ENCODE measurements at regions of chr7 and their contacts with region 1.

Region 1: GRCh38 chr7:131265227-131265626 is 62.4 kb upstream of the MKLN1 start:
- DNase-seq: no peak
- ATAC-seq: peak; percentile 34
- H3K4me3 Mint-ChIP-seq: no peak overlapping the region
- H3K27ac Mint-ChIP-seq: no peak overlapping the region
- H3K4me1 Mint-ChIP-seq: peaks cover 13% of the 10 kb centered on the region
- H3K27me3 Mint-ChIP-seq: no peaks in the 10 kb centered on the region
- CTCF ChIP-seq: no peak

Region 2: DNA sequence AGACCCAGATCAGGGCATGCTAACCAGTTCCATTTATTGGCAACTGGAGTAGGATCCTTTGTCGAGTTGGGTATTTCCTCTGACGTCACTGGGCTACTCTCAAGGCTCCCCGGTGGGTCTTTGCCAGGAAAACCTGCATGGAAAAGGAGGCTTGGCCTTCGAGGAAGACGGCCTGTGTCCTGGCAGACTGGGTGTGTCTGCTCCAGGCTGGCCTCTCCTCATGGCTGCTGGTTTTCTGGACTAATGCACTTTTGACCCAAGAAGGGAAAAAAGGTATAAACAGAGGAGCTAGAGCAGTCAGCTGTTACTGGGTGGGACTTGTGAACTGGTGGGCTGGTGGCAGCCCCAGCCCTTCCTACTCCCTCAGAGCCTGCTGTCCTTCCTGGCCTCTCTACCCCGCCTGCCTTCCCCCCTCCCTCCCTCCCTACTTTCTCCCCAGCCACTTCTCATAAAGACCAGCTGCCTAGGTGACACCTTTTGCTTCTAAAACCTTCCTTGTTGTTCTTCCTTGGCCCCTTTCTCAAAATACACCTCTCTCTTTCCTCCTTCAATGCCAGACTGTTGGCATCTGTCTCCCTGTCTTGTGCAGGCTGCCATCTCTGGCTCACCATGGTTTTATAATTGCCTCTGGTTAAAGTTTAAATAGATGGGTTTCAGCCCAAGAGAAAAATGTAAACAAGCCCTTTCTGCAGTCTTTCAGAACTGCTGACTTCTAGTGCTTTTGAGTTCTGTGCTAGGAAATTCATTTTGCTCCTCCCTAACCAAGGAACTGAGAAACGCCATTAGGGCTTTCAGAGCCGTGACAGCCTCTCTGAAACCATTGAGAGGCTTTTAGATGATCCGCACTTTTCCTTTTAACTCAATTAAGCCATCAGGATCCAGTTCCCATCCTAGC is 39.4 kb before region 1 on chr7:
- CTCF ChIA-PET with region 1: no interaction called
- POLR2A ChIA-PET with region 1: no interaction called
- intact Hi-C with region 1: no loop called
- DNase-seq: no peak
- ATAC-seq: no peak
- H3K4me3 Mint-ChIP-seq: no peak overlapping the region
- H3K27ac Mint-ChIP-seq: no peak overlapping the region
- H3K4me1 Mint-ChIP-seq: peaks cover 7% of the 10 kb centered on the region
- H3K27me3 Mint-ChIP-seq: no peaks in the 10 kb centered on the region
- CTCF ChIP-seq: no peak

Region 3: DNA sequence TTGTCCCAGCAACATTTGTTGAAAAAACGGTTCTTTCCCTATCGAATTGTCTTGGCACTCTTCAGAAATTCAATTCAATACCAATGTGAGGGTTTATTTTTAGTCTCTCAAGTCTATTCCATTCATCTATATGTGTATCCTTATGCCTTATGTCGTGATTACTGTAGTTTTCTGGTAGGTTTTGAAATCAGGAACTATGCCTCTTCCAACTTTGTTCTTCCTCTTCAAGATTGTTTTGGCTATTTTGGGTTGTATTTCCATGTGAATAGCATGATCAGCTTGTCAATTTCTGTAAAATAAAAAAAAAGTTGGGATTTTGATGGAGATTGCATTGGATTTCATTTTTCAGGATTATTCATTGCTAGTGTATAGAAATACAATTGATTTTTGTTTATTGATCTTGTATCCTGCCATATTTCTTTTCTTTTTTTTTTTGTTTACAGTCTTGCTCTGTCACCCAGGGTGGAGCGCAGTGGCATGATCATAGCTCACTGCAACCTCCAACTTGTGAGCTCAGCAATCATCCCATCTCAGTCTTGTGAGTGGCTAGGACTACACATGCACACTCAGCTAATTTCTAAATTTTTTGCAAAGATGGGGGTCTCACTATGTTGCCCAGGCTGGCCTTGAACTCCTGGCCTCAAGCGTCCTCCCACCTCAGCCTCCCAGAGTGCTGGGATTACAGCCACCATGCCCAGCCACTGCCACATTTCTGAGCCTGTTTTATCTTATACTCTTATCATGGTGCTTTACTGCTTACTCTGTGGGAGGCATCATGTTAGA is 16.2 kb after region 1 on chr7:
- CTCF ChIA-PET with region 1: no interaction called
- POLR2A ChIA-PET with region 1: interaction called, 11 read pairs
- intact Hi-C with region 1: no loop called
- DNase-seq: no peak
- ATAC-seq: no peak
- H3K4me3 Mint-ChIP-seq: no peak overlapping the region
- H3K27ac Mint-ChIP-seq: no peak overlapping the region
- H3K4me1 Mint-ChIP-seq: no peaks in the 10 kb centered on the region
- H3K27me3 Mint-ChIP-seq: no peaks in the 10 kb centered on the region
- CTCF ChIP-seq: no peak